Activated CD4-positive, alpha-beta T cell treated with anti-CD3 and anti-CD28 coated beads for 36 hours (primary cell): ENCODE measurements at regions of chrX and their contacts with region 1.

Region 1: GRCh38 chrX:48801280-48802088 is at the start of gene HDAC6:
- DNase-seq: peak; percentile 96
- ATAC-seq: peak; percentile 89
- H3K4me3 Mint-ChIP-seq: peak within 1 kb of the TSS; percentile 90
- H3K27ac Mint-ChIP-seq: peak within 1 kb of the TSS; percentile 98
- H3K4me1 Mint-ChIP-seq: peaks cover 15% of the 10 kb centered on the region
- H3K27me3 Mint-ChIP-seq: no peaks in the 10 kb centered on the region
- total RNA-seq, gene HDAC6: 59.2 to 69.7 TPM

Region 2: DNA sequence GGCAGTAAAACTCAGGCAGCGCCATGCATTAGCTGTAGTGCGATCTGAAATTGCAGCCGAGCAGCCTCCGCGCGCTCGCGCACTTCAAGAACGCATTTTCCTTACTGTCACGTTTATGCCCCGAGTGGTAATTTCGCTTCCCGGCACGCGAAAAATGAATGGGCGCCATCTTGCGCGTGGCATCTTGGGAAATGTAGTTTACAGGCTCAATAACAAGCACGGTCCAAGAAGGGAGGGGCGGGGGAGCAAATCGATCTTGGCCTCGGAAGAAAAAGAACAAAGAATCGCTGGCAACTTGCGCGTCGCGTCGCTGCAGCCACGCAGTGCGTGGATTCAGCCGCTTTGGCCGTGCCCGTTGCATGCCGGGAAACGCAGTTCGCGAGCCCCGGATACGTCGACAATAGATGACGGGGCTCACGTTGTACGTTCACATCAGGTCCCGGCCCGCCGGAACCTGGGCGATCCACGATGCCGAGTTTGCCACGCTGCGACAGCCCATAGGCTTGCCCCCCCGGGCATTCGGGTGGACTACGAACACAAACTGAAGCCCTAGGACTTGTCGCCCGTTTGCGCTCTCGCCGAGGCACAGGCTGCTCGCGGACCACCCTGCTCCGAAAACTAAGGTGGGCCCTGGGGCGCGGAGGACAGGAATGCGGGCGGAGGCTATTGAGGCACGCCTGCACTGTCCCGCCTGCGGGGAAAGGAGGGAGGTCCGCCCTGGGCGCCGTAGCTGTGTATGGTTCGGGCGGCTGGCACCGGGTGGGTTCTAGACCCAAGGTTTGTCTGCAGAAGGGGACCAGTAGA is 325.5 kb before region 1 on chrX and contains the start of gene FTSJ1:
- CTCF ChIA-PET with region 1: no interaction called
- POLR2A ChIA-PET with region 1: no interaction called
- intact Hi-C with region 1: loop called in 1 of 2 experiments (anchors 5 kb)
- DNase-seq: peak; percentile 88
- ATAC-seq: peak; percentile 91
- H3K4me3 Mint-ChIP-seq: peak within 1 kb of the TSS; percentile 93
- H3K27ac Mint-ChIP-seq: peak within 1 kb of the TSS; percentile 90
- H3K4me1 Mint-ChIP-seq: peaks cover 36% of the 10 kb centered on the region
- H3K27me3 Mint-ChIP-seq: no peaks in the 10 kb centered on the region
- total RNA-seq, gene FTSJ1: 73.0 to 93.7 TPM

Region 3: GRCh38 chrX:48597353-48598264 is 203.9 kb before region 1 on chrX and contains the start of gene WDR13:
- CTCF ChIA-PET with region 1: no interaction called
- POLR2A ChIA-PET with region 1: no interaction called
- intact Hi-C with region 1: loop called in 1 of 2 experiments (anchors 1 kb)
- DNase-seq: peak; percentile 94
- ATAC-seq: peak; percentile 91
- H3K4me3 Mint-ChIP-seq: peak within 1 kb of the TSS; percentile 99
- H3K27ac Mint-ChIP-seq: peak within 1 kb of the TSS; percentile 98
- H3K4me1 Mint-ChIP-seq: peaks cover 8% of the 10 kb centered on the region
- H3K27me3 Mint-ChIP-seq: no peaks in the 10 kb centered on the region
- total RNA-seq, gene WDR13: 27.2 to 39.4 TPM

Region 4: DNA sequence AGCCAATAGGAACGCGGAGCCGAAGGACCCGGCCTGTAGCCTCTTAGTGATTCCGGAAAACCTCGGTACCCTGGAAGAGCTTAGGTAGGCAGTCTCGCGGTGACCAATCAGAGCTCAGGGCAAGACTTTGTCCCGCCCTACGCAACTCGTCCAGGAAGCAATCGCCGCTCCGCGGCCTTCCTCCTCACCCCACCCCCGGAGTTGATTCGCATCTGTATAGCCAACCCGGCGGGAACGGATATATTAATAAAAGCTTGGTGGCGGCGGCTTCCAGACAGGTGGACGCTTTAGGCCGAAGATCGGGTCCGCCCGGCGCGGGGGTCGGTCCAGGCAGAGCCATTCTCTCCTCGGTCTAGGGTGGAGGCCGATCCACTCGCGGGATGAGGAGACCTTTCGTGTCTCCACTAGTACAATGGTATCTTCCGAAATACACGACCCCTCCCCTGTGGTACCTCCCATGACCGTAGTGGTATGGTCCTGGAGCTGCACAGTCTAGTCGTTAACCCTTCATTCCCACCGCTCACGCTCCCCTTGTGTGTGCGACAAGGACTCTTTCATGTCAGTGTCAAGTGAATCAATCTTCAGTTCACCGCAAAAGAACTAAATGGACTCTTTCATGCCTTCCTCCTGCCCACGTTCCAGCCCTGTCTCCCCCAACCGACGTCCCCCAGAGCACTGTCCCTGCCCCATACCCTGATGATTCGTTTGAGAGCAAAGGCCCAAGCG is 64.1 kb before region 1 on chrX:
- CTCF ChIA-PET with region 1: no interaction called
- POLR2A ChIA-PET with region 1: interaction called, 8 read pairs
- intact Hi-C with region 1: loop called (anchors 1 to 2 kb)
- DNase-seq: peak; percentile 92
- ATAC-seq: peak; percentile 96
- H3K4me3 Mint-ChIP-seq: peak overlapping the region; percentile 97
- H3K27ac Mint-ChIP-seq: peak overlapping the region; percentile 99
- H3K4me1 Mint-ChIP-seq: peaks cover 20% of the 10 kb centered on the region
- H3K27me3 Mint-ChIP-seq: no peaks in the 10 kb centered on the region

Region 5: DNA sequence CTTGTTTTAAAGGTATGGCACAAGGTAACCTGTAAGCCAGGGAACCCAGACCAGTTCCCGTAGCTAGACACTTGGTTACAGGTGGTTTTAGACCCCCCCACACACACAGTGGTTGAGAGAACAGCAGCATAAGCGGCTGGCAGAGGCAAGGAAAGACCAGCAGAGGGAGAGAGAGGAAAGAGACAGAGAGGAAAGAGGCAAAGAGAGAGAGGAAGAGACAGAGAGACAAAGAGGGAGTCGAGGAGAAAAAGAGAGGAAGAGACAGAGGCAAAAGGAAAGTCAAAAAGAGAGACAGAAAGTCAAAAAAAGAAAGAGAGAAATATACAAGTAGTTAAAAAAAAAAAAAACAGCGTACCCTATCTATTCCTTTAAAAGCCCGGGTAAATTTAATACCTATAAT is 53.4 kb after region 1 on chrX:
- CTCF ChIA-PET with region 1: no interaction called
- POLR2A ChIA-PET with region 1: no interaction called
- intact Hi-C with region 1: no loop called
- DNase-seq: peak; percentile 23
- ATAC-seq: no peak
- H3K4me3 Mint-ChIP-seq: no peak overlapping the region
- H3K27ac Mint-ChIP-seq: no peak overlapping the region
- H3K4me1 Mint-ChIP-seq: peaks cover 2% of the 10 kb centered on the region
- H3K27me3 Mint-ChIP-seq: peaks cover 4% of the 10 kb centered on the region

Region 6: DNA sequence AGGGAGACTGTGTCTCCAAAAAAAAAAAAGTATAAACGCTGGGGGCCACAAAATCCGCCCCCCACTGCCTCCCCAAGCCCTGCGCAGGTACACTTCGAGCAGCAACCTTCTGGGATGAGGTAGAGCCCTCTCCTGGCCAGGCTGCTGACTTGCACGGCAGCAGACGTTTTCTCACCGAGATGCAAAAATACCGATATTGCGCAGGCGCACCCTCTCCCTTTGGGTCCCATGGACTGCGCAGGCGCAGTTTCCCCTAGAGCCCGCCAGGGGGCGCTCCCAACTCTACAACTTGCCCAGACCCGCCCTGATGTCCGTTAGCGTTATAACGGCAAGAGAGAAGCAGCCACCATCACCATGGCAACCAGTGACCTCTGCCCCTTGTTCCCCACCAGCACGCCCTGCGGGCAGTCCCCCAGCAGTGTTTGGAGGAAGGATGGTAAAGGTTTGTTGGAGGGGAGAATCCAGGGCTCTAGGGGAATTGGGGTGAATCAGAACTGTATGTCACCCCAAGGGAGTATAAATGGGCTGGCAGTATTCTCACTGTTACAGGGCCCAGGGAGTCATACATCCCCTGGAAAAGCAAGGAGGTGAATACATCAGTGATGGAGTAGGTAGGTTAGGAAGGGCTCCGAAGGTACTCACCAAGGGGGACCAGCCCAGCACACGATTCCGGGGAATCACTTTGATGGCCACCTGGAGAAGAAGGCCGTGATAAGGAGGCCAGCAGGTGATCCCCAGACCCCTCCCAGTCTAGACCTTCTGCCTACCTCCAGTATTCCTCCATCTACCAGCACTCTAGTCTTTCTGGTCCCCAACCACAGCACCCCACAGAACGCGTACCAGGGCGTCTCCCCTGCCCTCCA is 115.9 kb after region 1 on chrX:
- CTCF ChIA-PET with region 1: no interaction called
- POLR2A ChIA-PET with region 1: interaction called, 4 read pairs
- intact Hi-C with region 1: loop called (anchors 2 to 5 kb)
- DNase-seq: peak; percentile 92
- ATAC-seq: peak; percentile 34
- H3K4me3 Mint-ChIP-seq: peak overlapping the region; percentile 97
- H3K27ac Mint-ChIP-seq: peak overlapping the region; percentile 95
- H3K4me1 Mint-ChIP-seq: peaks cover 51% of the 10 kb centered on the region
- H3K27me3 Mint-ChIP-seq: no peaks in the 10 kb centered on the region

Region 7: DNA sequence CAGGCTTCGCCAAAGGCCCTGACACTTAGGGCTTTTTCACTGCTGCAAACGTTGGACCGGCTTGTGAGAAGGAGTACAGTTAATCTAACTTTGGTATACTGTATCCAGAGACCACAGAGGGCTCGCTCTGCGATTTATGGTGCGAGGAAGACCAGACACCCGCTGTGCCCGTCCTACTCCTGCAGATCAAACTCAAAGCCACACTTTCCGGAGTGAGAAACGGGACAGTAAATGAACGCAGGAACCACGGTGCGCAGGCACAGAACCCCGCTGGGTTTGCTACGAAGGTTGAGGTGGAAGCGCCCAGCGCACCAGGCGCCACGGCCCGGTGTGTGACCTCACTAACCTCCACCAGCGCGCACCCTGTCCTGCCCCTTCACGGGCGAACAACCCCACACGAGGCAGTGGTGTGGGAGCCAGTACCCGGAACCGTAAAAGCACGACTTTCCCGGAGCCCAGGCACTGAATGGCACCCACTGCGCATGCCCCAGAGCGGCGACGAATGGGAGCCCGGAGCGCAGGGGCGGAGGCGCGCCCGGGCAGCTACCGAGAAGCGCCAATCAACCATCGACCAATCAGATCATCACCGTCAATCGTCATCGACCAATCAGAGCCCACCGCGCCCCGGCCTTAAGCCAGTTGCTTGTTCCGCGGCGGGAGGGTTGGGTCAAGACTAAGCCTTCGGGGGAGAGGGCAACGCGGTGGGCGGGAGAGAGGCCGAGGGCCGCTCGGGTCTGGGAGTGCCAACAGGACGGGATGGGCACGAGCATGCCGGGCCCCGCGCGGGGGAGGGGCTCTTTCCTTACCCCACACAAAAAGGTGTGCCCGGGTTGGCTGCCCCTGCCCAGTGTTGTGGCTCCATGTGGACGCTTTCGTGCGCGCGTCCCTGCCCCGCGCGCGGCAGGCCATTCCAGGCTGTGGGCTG is 299.5 kb after region 1 on chrX:
- CTCF ChIA-PET with region 1: no interaction called
- POLR2A ChIA-PET with region 1: no interaction called
- intact Hi-C with region 1: loop called in 1 of 2 experiments (anchors 1 kb)
- DNase-seq: peak; percentile 92
- ATAC-seq: peak; percentile 97
- H3K4me3 Mint-ChIP-seq: peak overlapping the region; percentile 85
- H3K27ac Mint-ChIP-seq: peak overlapping the region; percentile 89
- H3K4me1 Mint-ChIP-seq: peaks cover 7% of the 10 kb centered on the region
- H3K27me3 Mint-ChIP-seq: no peaks in the 10 kb centered on the region